ENCODE measurements at regions of chr2 and their contacts with region 1.

Region 1: DNA sequence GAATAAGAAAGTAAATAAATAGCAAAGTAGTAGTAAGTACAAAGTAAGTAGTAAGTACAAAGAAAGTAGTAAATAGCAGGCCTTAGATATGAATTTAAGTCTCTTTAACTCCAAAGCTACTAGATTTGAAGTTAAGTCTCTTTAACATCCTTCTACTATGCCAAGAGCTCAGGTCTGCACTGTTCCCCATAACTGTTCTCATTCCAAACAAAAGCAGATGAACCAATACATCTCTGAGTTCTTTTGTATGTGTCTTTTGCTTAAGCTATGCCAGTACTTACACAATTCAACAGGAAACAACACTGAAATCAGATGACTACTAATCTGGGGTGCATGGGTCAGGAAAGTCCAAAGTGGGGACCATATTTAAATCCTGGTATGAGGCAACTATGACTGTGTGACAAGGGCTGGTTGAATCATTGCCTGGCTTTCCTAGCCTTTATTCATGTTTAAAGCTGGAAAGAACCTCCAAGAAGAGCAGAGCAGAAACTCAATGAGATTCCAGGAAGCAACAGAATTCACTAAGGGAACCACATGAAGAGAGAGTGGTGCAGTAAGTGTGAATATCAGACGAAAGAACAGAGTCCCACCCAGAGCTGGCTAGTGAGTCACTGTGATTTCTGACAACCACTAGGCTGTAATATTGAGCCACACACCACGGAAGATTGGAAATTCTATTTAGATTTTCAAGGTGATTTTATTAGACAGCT is 51.0 kb upstream of the CYP26B1 start:
- DNase-seq: peak; percentile 45
- H3K4me3 Mint-ChIP-seq: no peak overlapping the region
- H3K27ac Mint-ChIP-seq: no peak overlapping the region
- H3K4me1 Mint-ChIP-seq: peaks cover 6% of the 10 kb centered on the region
- H3K27me3 Mint-ChIP-seq: no peaks in the 10 kb centered on the region
- CTCF ChIP-seq: no peak

Region 2: GRCh38 chr2:72325592-72326422 is 127.1 kb after region 1 on chr2:
- CTCF ChIA-PET with region 1: interaction called, 6 read pairs
- POLR2A ChIA-PET with region 1: interaction called, 3 read pairs
- intact Hi-C with region 1: loop called (anchors 5 kb)
- DNase-seq: peak; percentile 52
- H3K4me3 Mint-ChIP-seq: no peak overlapping the region
- H3K27ac Mint-ChIP-seq: no peak overlapping the region
- H3K4me1 Mint-ChIP-seq: no peaks in the 10 kb centered on the region
- H3K27me3 Mint-ChIP-seq: no peaks in the 10 kb centered on the region
- CTCF ChIP-seq: peak; percentile 58

Measured in MCF 10A (cell line).